ENCODE measurements at regions of chr12 and their contacts with region 1.

Region 1: DNA sequence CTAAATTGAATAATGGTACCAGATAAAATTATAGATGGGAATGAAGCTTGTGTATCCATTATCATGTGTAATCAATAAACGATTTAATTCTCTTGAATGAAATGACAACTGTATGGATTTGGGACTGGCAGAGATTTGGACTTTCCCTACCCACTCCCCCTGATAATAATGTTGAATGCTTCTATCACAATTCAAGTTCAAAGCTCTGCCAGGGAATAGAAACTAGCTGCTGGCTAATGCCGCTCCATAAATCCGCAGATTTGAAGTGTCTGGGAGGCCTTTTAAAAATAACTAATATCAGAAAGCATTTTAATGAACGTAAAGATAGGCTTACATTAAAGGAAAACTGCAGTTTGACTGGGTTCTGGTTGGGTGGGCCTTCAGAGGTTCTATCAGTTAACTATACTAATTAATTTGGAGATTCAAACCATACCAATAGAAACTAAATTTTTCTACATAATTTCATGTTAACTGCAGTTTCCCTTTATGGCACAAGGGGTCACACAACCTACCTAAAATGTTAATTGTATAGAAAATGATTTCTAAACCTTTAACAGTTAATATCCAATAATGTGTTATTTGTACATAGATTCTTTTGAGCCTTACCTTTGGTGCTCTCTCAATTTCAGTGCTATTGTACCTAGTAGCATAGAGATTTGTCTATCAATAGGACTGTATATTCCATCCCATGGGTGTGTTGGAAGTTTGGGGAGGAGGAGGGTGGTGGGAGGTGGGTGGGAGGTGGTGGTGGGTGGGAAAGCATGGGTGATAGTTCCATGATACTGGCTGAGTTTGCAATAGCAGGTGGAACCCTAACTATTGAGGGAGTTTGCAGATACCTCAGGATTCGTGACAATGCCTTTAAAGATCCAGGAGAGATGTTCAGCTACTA is 4.9 kb downstream of the HNRNPA1 start:
- DNase-seq: no peak
- H3K4me3 ChIP-seq: peak overlapping the region; percentile 6; the same call in 1 of the 2 replicates
- CTCF ChIP-seq: no peak

Region 2: GRCh38 chr12:54300732-54301427 is 15.5 kb after region 1 on chr12 and contains the start of gene NFE2:
- CTCF ChIA-PET with region 1: interaction called, 42 read pairs
- POLR2A ChIA-PET with region 1: interaction called, 12 read pairs
- DNase-seq: no peak
- H3K4me3 ChIP-seq: peak within 1 kb of the TSS; percentile 49
- CTCF ChIP-seq: peak; percentile 23